Activated B cell treated with CpG ODN at 0.5 μM for 24 hours (primary cell): ENCODE measurements at regions of chr16 and their contacts with region 1.

Region 1: GRCh38 chr16:66344533-66345145 is 21.9 kb upstream of the CDH5 start:
- DNase-seq: no peak
- ATAC-seq: no peak
- H3K4me3 Mint-ChIP-seq: no peak overlapping the region
- H3K27ac Mint-ChIP-seq: no peak overlapping the region
- H3K4me1 Mint-ChIP-seq: no peaks in the 10 kb centered on the region
- H3K27me3 Mint-ChIP-seq: peaks cover 20% of the 10 kb centered on the region
- CTCF ChIP-seq: peak; percentile 94

Region 2: DNA sequence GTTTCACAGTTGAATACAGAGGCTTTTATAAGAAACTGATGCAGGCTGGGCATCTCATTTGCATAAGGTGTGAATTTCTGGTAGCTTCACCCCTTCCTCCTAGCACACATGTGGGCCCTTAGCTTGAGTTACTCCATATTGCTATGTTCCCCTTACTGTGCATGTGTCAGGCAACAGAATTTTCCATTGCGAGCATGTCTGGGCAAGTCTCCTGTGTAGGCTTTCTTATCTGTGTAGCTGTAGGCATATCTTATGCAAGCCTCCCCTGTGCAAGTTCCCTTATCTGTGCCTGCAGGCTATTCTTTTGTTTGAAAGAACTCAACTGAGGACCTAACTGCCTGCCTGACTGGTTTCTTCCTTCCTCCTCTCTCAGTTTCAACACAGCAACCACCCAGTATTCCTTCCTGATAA is 575.6 kb before region 1 on chr16:
- CTCF ChIA-PET with region 1: no interaction called
- POLR2A ChIA-PET with region 1: no interaction called
- intact Hi-C with region 1: no loop called
- DNase-seq: no peak
- ATAC-seq: no peak
- H3K4me3 Mint-ChIP-seq: no peak overlapping the region
- H3K27ac Mint-ChIP-seq: no peak overlapping the region
- H3K4me1 Mint-ChIP-seq: peaks cover 1% of the 10 kb centered on the region
- H3K27me3 Mint-ChIP-seq: no peaks in the 10 kb centered on the region
- CTCF ChIP-seq: no peak

Region 3: GRCh38 chr16:66357153-66357928 is 12.7 kb after region 1 on chr16:
- CTCF ChIA-PET with region 1: interaction called, 16 read pairs
- POLR2A ChIA-PET with region 1: no interaction called
- intact Hi-C with region 1: no loop called
- DNase-seq: no peak
- ATAC-seq: no peak
- H3K4me3 Mint-ChIP-seq: no peak overlapping the region
- H3K27ac Mint-ChIP-seq: no peak overlapping the region
- H3K4me1 Mint-ChIP-seq: no peaks in the 10 kb centered on the region
- H3K27me3 Mint-ChIP-seq: peaks cover 38% of the 10 kb centered on the region
- CTCF ChIP-seq: no peak